ENCODE measurements at regions of chr7 and their contacts with region 1.

Region 1: GRCh38 chr7:101138213-101138870 is 11.4 kb downstream of the SERPINE1 start:
- DNase-seq: peak; percentile 94
- ATAC-seq: peak; percentile 91
- H3K4me3 Mint-ChIP-seq: peak overlapping the region; percentile 43
- H3K27ac Mint-ChIP-seq: no peak overlapping the region
- H3K4me1 Mint-ChIP-seq: peaks cover 58% of the 10 kb centered on the region
- H3K27me3 Mint-ChIP-seq: peaks cover 7% of the 10 kb centered on the region

Region 2: GRCh38 chr7:100889761-100890634 is 248.3 kb before region 1 on chr7:
- CTCF ChIA-PET with region 1: no interaction called
- POLR2A ChIA-PET with region 1: no interaction called
- intact Hi-C with region 1: loop called in 1 of 2 experiments (anchors 1 kb)
- DNase-seq: peak; percentile 96
- ATAC-seq: peak; percentile 95
- H3K4me3 Mint-ChIP-seq: peak overlapping the region; percentile 77
- H3K27ac Mint-ChIP-seq: no peak overlapping the region
- H3K4me1 Mint-ChIP-seq: peaks cover 38% of the 10 kb centered on the region
- H3K27me3 Mint-ChIP-seq: peaks cover 14% of the 10 kb centered on the region

Region 3: GRCh38 chr7:101125989-101126650 is 12.2 kb before region 1 on chr7:
- CTCF ChIA-PET with region 1: interaction called, 10 read pairs
- POLR2A ChIA-PET with region 1: no interaction called
- intact Hi-C with region 1: no loop called
- DNase-seq: no peak
- ATAC-seq: no peak
- H3K4me3 Mint-ChIP-seq: no peak overlapping the region
- H3K27ac Mint-ChIP-seq: no peak overlapping the region
- H3K4me1 Mint-ChIP-seq: peaks cover 33% of the 10 kb centered on the region
- H3K27me3 Mint-ChIP-seq: peaks cover 52% of the 10 kb centered on the region

Region 4: DNA sequence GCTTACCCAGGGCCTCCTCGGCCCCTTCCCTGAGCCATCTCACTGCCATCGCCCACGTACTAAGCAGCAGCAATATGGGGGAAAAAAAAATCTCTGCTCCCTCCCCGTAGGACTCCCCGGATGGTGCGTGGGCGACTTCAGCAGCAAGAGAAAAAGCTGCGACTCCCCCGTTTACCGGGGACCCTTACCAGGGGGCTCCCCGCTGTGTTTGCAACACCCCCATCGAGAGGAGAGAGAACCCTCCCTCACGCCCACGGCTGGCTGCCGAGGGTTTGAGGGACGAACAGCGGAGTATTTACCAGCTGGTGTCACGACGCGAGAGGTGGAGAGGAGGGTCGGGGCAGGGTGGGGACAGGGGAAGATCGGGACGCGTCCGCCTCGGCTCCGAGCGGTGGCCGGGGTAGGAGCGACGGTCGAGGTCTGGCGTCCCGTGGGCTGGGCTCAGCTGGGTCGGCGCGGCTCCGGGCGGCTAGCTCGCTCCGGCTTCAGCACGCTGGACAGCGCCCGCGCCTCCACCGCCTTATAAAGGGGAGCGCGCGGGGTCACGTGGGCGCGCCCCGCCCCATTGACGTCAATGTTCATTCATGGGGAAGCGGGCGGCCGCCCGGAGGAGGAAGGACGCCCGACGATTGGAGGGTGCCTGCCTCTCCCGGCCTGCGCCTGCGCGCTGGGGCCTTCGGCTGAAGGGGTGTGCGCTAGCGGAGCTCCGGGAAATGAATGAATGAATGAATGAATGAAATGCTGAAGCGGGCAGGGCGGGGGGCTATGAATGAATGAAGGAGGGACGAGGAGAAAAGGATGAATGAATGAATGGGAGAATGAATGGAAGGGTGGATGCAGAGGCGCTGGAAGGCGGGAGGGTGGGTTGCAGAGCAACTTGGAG is 27.0 kb after region 1 on chr7 and contains the start of gene VGF:
- CTCF ChIA-PET with region 1: interaction called, 19 read pairs
- POLR2A ChIA-PET with region 1: interaction called, 3 read pairs
- intact Hi-C with region 1: no loop called
- DNase-seq: peak; percentile 97
- ATAC-seq: peak; percentile 79
- H3K4me3 Mint-ChIP-seq: peak within 1 kb of the TSS; percentile 66
- H3K27ac Mint-ChIP-seq: peak within 1 kb of the TSS; percentile 38
- H3K4me1 Mint-ChIP-seq: peaks cover 57% of the 10 kb centered on the region
- H3K27me3 Mint-ChIP-seq: peaks cover 52% of the 10 kb centered on the region
- total RNA-seq, gene VGF: 0.09 to 0.11 TPM

Region 5: GRCh38 chr7:101185258-101185839 is 47.0 kb after region 1 on chr7:
- CTCF ChIA-PET with region 1: interaction called, 132 read pairs
- POLR2A ChIA-PET with region 1: no interaction called
- intact Hi-C with region 1: no loop called
- DNase-seq: no peak
- ATAC-seq: no peak
- H3K4me3 Mint-ChIP-seq: no peak overlapping the region
- H3K27ac Mint-ChIP-seq: no peak overlapping the region
- H3K4me1 Mint-ChIP-seq: peaks cover 3% of the 10 kb centered on the region
- H3K27me3 Mint-ChIP-seq: peaks cover 25% of the 10 kb centered on the region

Region 6: GRCh38 chr7:101217388-101218235 is 79.3 kb after region 1 on chr7 and contains the starts of genes PLOD3 and ZNHIT1:
- CTCF ChIA-PET with region 1: interaction called, 14 read pairs
- POLR2A ChIA-PET with region 1: no interaction called
- intact Hi-C with region 1: loop called in 1 of 2 experiments (anchors 1 kb)
- DNase-seq: peak; percentile 97
- ATAC-seq: peak; percentile 88
- H3K4me3 Mint-ChIP-seq: peak within 1 kb of the TSS; percentile 99
- H3K27ac Mint-ChIP-seq: peak within 1 kb of the TSS; percentile 85
- H3K4me1 Mint-ChIP-seq: peaks cover 31% of the 10 kb centered on the region
- H3K27me3 Mint-ChIP-seq: no peaks in the 10 kb centered on the region
- total RNA-seq, gene PLOD3: 30.7 to 35.9 TPM
- total RNA-seq, gene ZNHIT1: 44.2 TPM

Region 7: GRCh38 chr7:101287032-101287431 is 148.7 kb after region 1 on chr7:
- CTCF ChIA-PET with region 1: interaction called, 48 read pairs
- POLR2A ChIA-PET with region 1: no interaction called
- intact Hi-C with region 1: no loop called
- DNase-seq: peak; percentile 6
- ATAC-seq: no peak
- H3K4me3 Mint-ChIP-seq: no peak overlapping the region
- H3K27ac Mint-ChIP-seq: no peak overlapping the region
- H3K4me1 Mint-ChIP-seq: peaks cover 14% of the 10 kb centered on the region
- H3K27me3 Mint-ChIP-seq: peaks cover 10% of the 10 kb centered on the region